ENCODE measurements at regions of chr14 and their contacts with region 1.

Region 1: DNA sequence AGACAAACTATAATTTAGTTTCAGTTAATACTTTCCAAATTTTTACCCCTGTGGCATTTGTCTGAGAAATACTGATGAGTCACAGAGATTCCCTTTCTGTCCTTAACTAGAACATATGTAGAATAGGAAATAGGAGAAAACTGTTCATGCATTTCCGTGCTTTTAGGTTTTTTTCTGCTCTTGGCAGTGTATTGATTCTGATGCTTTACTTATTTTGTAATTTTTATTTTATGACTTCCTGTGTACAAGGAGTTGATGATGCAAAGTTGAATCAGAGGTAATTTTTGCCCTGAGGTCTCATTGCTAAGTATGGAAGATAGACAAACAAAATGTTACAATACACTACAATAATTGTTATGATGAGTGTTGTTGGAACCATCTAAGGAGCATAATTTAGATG is 23.1 kb downstream of the MNAT1 start:
- DNase-seq: peak; percentile 98
- ATAC-seq: peak; percentile 81
- H3K4me3 ChIP-seq: peak overlapping the region; percentile 41
- H3K27ac ChIP-seq: peak overlapping the region; percentile 78
- H3K4me1 ChIP-seq: peaks cover 59% of the 10 kb centered on the region
- H3K27me3 ChIP-seq: no peaks in the 10 kb centered on the region
- CTCF ChIP-seq: no peak

Region 2: DNA sequence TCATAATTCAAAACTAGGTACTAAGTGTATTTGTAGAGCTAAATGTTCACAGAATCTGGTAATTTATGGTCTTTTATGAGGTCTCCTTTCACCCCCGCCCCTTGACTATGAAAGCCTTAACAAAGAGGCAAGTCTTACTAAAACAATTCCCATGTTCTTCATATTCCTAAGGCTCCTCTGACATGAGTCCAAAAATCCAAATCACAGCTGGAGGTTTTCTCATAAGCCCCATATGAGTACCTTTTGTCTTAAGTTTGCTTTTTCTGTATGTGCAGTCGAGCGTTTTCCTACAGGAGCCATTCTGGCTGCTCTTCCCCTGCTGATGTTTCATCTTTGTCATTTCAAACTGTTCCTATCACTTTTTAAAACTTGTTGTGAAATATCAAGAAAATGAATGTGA is 163.6 kb before region 1 on chr14:
- CTCF ChIA-PET with region 1: no interaction called
- POLR2A ChIA-PET with region 1: no interaction called
- intact Hi-C with region 1: no loop called
- DNase-seq: no peak
- ATAC-seq: no peak
- H3K4me3 ChIP-seq: no peak overlapping the region
- H3K27ac ChIP-seq: no peak overlapping the region
- H3K4me1 ChIP-seq: no peaks in the 10 kb centered on the region
- H3K27me3 ChIP-seq: no peaks in the 10 kb centered on the region
- CTCF ChIP-seq: no peak

Region 3: DNA sequence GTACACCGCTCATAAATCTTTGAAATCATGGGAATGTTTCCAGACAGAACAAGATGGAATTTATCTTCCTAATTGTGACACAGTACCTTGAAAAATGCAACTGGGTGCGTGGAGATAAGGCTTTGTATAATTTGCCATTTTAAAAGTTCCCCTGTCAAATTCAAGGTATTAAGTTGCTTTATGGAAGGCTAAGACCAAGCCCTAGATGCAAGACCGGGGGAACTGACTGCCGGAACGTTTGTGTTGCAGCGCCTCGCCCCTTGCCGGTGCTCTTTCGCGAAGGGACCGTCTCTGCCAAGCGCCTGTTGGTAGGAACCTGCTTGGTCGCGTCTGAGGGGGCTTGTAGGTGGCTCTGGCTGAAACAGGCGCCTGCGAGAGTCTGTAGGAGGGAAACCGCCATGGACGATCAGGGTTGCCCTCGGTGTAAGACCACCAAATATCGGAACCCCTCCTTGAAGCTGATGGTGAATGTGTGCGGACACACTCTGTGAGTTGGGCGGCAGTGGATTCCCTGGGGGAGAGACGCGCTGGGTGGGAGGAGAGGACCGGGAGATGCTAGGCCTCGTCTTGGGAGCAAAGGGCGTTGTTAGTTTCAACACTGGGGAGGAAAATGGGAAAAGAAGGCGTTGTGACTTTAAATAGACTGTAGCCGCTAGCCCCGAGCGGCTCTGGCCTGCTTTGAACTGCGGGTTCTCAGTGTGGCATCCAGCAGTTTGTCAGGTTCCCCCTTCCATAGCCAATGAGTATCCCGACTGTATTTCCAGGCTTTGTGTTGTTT is 23.0 kb before region 1 on chr14 and contains the start of gene MNAT1:
- CTCF ChIA-PET with region 1: interaction called, 6 read pairs
- POLR2A ChIA-PET with region 1: no interaction called
- intact Hi-C with region 1: loop called (anchors 1 kb)
- DNase-seq: peak; percentile 95
- ATAC-seq: peak; percentile 84
- H3K4me3 ChIP-seq: peak within 1 kb of the TSS; percentile 94
- H3K27ac ChIP-seq: no peak within 1 kb of the TSS
- H3K4me1 ChIP-seq: peaks cover 15% of the 10 kb centered on the region
- H3K27me3 ChIP-seq: no peaks in the 10 kb centered on the region
- CTCF ChIP-seq: no peak
- total RNA-seq, gene MNAT1: 88.6 and 95.7 TPM in 2 replicates

Region 4: GRCh38 chr14:60777856-60778578 is 20.4 kb after region 1 on chr14:
- CTCF ChIA-PET with region 1: no interaction called
- POLR2A ChIA-PET with region 1: interaction called, 3 read pairs
- intact Hi-C with region 1: loop called (anchors 1 kb)
- DNase-seq: peak; percentile 91
- ATAC-seq: peak; percentile 76
- H3K4me3 ChIP-seq: no peak overlapping the region
- H3K27ac ChIP-seq: peak overlapping the region; percentile 15
- H3K4me1 ChIP-seq: peaks cover 44% of the 10 kb centered on the region
- H3K27me3 ChIP-seq: no peaks in the 10 kb centered on the region
- CTCF ChIP-seq: no peak

Region 5: GRCh38 chr14:60862286-60862685 is 104.7 kb after region 1 on chr14:
- CTCF ChIA-PET with region 1: no interaction called
- POLR2A ChIA-PET with region 1: no interaction called
- intact Hi-C with region 1: loop called (anchors 5 kb)
- DNase-seq: peak; percentile 92
- ATAC-seq: peak; percentile 57
- H3K4me3 ChIP-seq: no peak overlapping the region
- H3K27ac ChIP-seq: no peak overlapping the region
- H3K4me1 ChIP-seq: peaks cover 20% of the 10 kb centered on the region
- H3K27me3 ChIP-seq: no peaks in the 10 kb centered on the region
- CTCF ChIP-seq: no peak

Region 6: DNA sequence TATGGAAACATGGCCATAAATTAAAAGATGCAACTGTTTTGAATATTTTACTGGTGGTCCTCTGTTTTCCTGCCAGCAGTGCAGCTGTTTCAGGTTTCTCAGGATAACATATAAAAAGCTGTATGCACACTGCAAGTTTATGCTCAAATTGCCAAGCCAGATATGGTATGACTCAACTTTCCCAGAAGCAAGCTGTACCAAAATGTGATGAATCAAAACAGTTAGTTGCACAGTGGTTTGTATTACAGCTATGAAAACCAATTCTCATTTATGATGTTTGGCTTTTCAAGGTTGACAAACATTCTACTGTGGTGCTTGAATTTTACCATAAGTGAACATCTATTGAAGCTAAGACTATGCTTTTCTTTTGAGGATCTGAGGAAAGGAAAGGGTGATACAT is 207.8 kb after region 1 on chr14:
- CTCF ChIA-PET with region 1: no interaction called
- POLR2A ChIA-PET with region 1: no interaction called
- intact Hi-C with region 1: loop called (anchors 1 kb)
- DNase-seq: peak; percentile 66
- ATAC-seq: peak; percentile 92
- H3K4me3 ChIP-seq: no peak overlapping the region
- H3K27ac ChIP-seq: peak overlapping the region; percentile 27
- H3K4me1 ChIP-seq: peaks cover 5% of the 10 kb centered on the region; the same call in 1 of the 2 replicates
- H3K27me3 ChIP-seq: no peaks in the 10 kb centered on the region
- CTCF ChIP-seq: no peak

Measured in PC-3 (cell line).